ENCODE measurements at regions of chr20 and their contacts with region 1.

Region 1: GRCh38 chr20:15654208-15654645 is 919.0 kb downstream of the KIF16B start:
- DNase-seq: peak; percentile 44 to 52
- H3K4me3 ChIP-seq: no peak overlapping the region
- H3K27ac ChIP-seq: no peak overlapping the region
- H3K4me1 ChIP-seq: peaks cover 0 to 10% (median 5%) of the 10 kb centered on the region in 4 experiments; a peak in 2 of 7 replicates
- H3K27me3 ChIP-seq: no peaks in the 10 kb centered on the region
- CTCF ChIP-seq: peak in 2 of 3 experiments; percentile 70 to 83; a peak in 3 of 4 replicates
- EP300 ChIP-seq: no peak
- POLR2A ChIP-seq: no peak
- RAD21 ChIP-seq: peak; percentile 77 to 87

Region 2: DNA sequence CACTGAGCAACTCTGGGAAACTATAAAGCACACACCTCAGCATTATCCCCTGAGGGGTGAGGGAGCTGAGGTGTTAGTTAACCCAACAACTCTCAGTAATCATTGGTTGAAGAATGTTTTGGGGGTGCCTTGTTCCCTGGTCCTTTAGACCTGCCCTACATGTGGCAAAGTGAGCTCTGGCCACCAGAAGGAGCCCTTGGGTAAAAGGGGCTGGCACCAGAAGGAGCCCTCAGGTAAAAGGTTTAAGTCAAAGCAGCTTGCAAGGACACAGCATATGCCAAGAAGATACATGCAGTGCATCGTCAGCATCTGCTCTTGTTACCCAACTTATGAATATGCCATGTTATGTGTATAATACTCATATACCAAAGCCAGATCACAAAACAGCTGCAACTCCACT is 162.7 kb before region 1 on chr20:
- CTCF ChIA-PET with region 1: interaction called, 50 read pairs
- POLR2A ChIA-PET with region 1: no interaction called
- DNase-seq: peak; percentile 10 to 62
- H3K4me3 ChIP-seq: no peak overlapping the region
- H3K27ac ChIP-seq: no peak overlapping the region
- H3K4me1 ChIP-seq: peaks cover 0 to 9% (median 2%) of the 10 kb centered on the region in 4 experiments; a peak in 2 of 7 replicates
- H3K27me3 ChIP-seq: no peaks in the 10 kb centered on the region
- CTCF ChIP-seq: peak; percentile 62 to 80 (median 72)
- EP300 ChIP-seq: no peak
- POLR2A ChIP-seq: no peak
- RAD21 ChIP-seq: peak; percentile 81 to 88

Region 3: GRCh38 chr20:15564981-15565380 is 89.2 kb before region 1 on chr20:
- CTCF ChIA-PET with region 1: no interaction called
- POLR2A ChIA-PET with region 1: no interaction called
- DNase-seq: no peak
- H3K4me3 ChIP-seq: no peak overlapping the region
- H3K27ac ChIP-seq: no peak overlapping the region
- H3K4me1 ChIP-seq: peaks cover 0 to 18% (median 8%) of the 10 kb centered on the region in 4 experiments; a peak in 4 of 7 replicates
- H3K27me3 ChIP-seq: no peaks in the 10 kb centered on the region; a peak in 1 of 7 replicates
- CTCF ChIP-seq: no peak
- EP300 ChIP-seq: no peak
- POLR2A ChIP-seq: no peak
- RAD21 ChIP-seq: no peak

Region 4: DNA sequence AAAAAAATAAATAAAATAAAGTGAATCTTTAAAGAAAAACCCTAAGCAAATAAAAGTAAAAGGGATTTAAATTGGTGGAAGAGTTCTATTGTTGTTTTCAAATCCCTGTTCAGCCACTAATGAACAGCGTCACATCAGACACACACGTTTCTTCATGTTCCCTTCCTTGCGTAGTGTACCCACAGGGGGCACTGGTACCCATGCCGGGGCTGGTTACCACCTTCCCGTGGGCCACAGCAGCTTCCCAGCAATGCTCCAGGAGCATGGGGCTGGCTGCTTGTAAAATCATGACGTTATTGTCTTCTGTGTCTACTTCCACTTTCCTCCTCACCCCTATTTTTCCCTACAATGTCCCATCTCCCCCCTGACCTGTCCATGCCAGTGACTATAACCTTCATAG is 69.7 kb before region 1 on chr20:
- CTCF ChIA-PET with region 1: interaction called, 14 read pairs
- POLR2A ChIA-PET with region 1: no interaction called
- DNase-seq: no peak
- H3K4me3 ChIP-seq: no peak overlapping the region
- H3K27ac ChIP-seq: no peak overlapping the region
- H3K4me1 ChIP-seq: peaks cover 0 to 6% (median 1%) of the 10 kb centered on the region in 4 experiments; a peak in 2 of 7 replicates
- H3K27me3 ChIP-seq: no peaks in the 10 kb centered on the region
- CTCF ChIP-seq: peak; percentile 20 to 34 (median 26); a peak in 3 of 4 replicates
- EP300 ChIP-seq: no peak
- POLR2A ChIP-seq: no peak
- RAD21 ChIP-seq: peak; percentile 27 to 46

Region 5: GRCh38 chr20:15643714-15644113 is 10.5 kb before region 1 on chr20:
- CTCF ChIA-PET with region 1: interaction called, 27 read pairs
- POLR2A ChIA-PET with region 1: no interaction called
- DNase-seq: no peak
- H3K4me3 ChIP-seq: no peak overlapping the region
- H3K27ac ChIP-seq: no peak overlapping the region
- H3K4me1 ChIP-seq: no peaks in the 10 kb centered on the region
- H3K27me3 ChIP-seq: no peaks in the 10 kb centered on the region
- CTCF ChIP-seq: peak in 1 of 3 experiments; percentile 50; a peak in 1 of 4 replicates
- EP300 ChIP-seq: no peak
- POLR2A ChIP-seq: no peak
- RAD21 ChIP-seq: peak; percentile 31 to 43; a peak in 2 of 4 replicates

Region 6: DNA sequence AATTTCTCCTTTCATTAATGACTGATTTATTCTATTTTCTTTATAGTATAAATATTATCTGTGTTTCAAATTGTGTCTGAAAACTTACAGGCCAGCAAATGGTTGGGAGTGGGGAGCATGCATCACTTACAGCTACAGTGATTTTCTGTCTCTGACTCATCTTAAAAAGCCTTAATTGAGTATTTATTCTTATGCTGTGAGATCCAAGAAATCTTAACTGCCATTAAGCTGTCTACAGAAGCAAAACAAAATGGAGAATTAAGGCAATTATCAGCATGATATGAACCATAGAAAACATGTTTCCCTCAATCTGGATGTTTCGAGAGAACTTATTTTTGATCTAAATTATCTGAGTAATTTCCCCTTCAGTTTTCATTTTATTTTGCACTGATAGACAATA is 87.9 kb after region 1 on chr20:
- CTCF ChIA-PET with region 1: no interaction called
- POLR2A ChIA-PET with region 1: no interaction called
- DNase-seq: no peak
- H3K4me3 ChIP-seq: no peak overlapping the region
- H3K27ac ChIP-seq: no peak overlapping the region
- H3K4me1 ChIP-seq: peaks cover 0 to 3% (median 0%) of the 10 kb centered on the region in 4 experiments; a peak in 2 of 7 replicates
- H3K27me3 ChIP-seq: no peaks in the 10 kb centered on the region
- CTCF ChIP-seq: no peak
- EP300 ChIP-seq: no peak
- POLR2A ChIP-seq: no peak
- RAD21 ChIP-seq: no peak